ENCODE measurements at regions of chr10 and their contacts with region 1.

Region 1: GRCh38 chr10:2686691-2687090 is 380.7 kb upstream of the PFKP start:
- DNase-seq: no peak
- H3K4me3 ChIP-seq: no peak overlapping the region
- H3K27ac ChIP-seq: no peak overlapping the region
- H3K4me1 ChIP-seq: no peaks in the 10 kb centered on the region
- CTCF ChIP-seq: no peak

Region 2: GRCh38 chr10:2700626-2701305 is 14.1 kb after region 1 on chr10:
- CTCF ChIA-PET with region 1: no interaction called
- POLR2A ChIA-PET with region 1: interaction called, 10 read pairs
- intact Hi-C with region 1: no loop called
- DNase-seq: peak; percentile 86
- H3K4me3 ChIP-seq: no peak overlapping the region
- H3K27ac ChIP-seq: peak overlapping the region; percentile 81
- H3K4me1 ChIP-seq: peaks cover 46% of the 10 kb centered on the region
- CTCF ChIP-seq: no peak